ENCODE measurements at regions of chr7 and their contacts with region 1.

Region 1: GRCh38 chr7:31724696-31725095 is 37.7 kb downstream of the PPP1R17 start:
- DNase-seq: no peak
- H3K4me3 ChIP-seq: no peak overlapping the region
- H3K27ac ChIP-seq: no peak overlapping the region
- H3K4me1 ChIP-seq: no peaks in the 10 kb centered on the region
- H3K27me3 ChIP-seq: no peaks in the 10 kb centered on the region
- CTCF ChIP-seq: no peak
- POLR2A ChIP-seq: no peak

Region 2: GRCh38 chr7:31373337-31374289 is 351.1 kb before region 1 on chr7:
- intact Hi-C with region 1: no loop called
- DNase-seq: peak; percentile 39
- H3K4me3 ChIP-seq: no peak overlapping the region
- H3K27ac ChIP-seq: no peak overlapping the region
- H3K4me1 ChIP-seq: no peaks in the 10 kb centered on the region
- H3K27me3 ChIP-seq: no peaks in the 10 kb centered on the region
- CTCF ChIP-seq: peak; percentile 24 to 57 (median 50)
- POLR2A ChIP-seq: no peak

Region 3: DNA sequence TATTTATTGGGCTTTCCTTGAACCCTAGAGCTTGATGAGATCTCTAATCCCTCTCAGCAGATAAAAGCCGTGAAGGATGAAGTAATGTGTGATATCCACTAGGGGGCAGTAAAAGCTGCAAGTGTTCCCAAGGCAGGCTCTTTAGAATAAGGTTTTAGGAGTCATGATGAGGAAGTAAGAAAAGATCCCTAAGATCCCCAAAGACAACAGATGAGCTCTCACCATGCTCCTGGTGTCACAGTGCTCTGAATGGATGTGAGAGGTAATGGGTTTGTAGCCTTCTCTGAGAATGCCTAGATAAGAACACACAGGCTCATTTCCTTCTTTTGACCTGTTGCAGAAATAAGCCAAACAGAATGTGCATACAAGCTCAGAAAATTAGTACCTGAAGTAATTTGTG is 281.2 kb before region 1 on chr7:
- intact Hi-C with region 1: loop called (anchors 5 kb)
- DNase-seq: no peak
- H3K4me3 ChIP-seq: no peak overlapping the region
- H3K27ac ChIP-seq: no peak overlapping the region
- H3K4me1 ChIP-seq: no peaks in the 10 kb centered on the region
- H3K27me3 ChIP-seq: no peaks in the 10 kb centered on the region
- CTCF ChIP-seq: peak in 3 of 4 experiments; percentile 60 to 67 (median 63)
- POLR2A ChIP-seq: no peak

Region 4: GRCh38 chr7:31633894-31634494 is 90.7 kb before region 1 on chr7:
- intact Hi-C with region 1: no loop called
- DNase-seq: peak; percentile 55
- H3K4me3 ChIP-seq: no peak overlapping the region
- H3K27ac ChIP-seq: no peak overlapping the region
- H3K4me1 ChIP-seq: no peaks in the 10 kb centered on the region
- H3K27me3 ChIP-seq: no peaks in the 10 kb centered on the region
- CTCF ChIP-seq: peak in 3 of 4 experiments; percentile 60 to 74 (median 71)
- POLR2A ChIP-seq: no peak

Measured in prostate gland (tissue), 2 donors.